WTC11 (cell line): ENCODE measurements at regions of chr1 and their contacts with region 1.

Region 1: DNA sequence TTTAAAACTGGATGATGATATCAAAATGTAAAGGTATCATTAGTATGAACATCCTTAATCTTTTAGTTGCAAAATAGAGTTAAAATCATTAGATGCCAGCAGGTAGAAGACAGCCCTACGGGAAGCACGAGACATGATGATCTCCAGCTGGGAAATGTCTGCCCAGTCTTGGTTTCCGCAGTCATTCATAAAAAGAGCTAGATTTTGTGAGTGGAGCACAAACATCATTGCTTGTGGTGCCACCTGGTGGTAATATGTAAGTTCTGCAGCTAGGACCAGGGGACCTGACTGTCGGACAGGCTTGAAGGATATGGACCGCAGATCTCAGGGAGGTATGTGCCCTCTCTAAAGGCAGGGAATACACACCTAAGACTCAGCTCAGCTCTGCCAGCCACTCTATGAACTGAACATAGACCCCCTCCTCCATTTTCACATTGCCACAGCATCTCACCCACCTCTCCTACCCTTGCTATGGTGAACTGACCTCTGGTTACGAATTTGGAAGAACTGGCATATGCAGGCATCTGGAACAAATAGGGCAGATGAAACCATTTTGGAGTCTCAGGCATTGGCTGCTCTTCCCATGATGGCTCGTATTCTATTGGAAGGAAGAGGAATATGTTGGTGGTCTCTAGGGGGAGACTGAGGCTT is 9.2 kb downstream of the FCMR start:
- DNase-seq: peak; percentile 70
- ATAC-seq: peak; percentile 43
- H3K4me3 Mint-ChIP-seq: no peak overlapping the region
- H3K27ac Mint-ChIP-seq: no peak overlapping the region
- H3K4me1 Mint-ChIP-seq: peaks cover 8% of the 10 kb centered on the region
- H3K27me3 Mint-ChIP-seq: peaks cover 40% of the 10 kb centered on the region
- CTCF ChIP-seq: peak; percentile 81

Region 2: DNA sequence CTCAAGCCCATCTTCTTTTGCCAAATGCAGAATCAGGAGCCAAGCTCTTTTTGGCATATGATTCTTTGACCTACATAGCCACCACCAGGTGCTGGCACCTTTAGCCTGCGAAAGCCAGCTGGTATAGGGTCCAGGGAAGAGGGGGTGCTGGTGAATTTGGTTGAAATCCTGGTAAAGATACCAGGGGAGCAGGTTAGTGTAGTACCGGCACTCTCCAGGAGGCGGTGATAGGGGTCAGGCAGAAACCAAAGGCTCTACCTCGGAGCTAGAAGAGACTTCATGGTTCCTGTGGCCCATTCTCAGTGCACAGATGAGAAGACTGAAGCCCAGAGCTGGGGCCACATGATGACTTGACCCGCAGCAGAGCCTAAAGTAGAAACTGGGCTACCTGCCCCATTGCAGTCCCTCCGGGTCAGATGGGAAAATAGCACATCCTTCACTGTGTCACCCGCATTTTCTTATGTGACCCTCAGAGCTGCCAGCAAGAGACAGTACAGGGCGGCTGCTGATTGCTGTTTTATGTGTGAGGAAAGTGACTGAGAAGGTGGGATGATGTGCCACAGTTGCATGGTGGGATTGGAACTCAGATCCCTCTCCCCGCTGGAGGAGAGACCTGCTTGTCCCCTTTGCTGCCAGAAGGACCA is 177.9 kb before region 1 on chr1:
- CTCF ChIA-PET with region 1: interaction called, 35 read pairs
- POLR2A ChIA-PET with region 1: interaction called, 10 read pairs
- DNase-seq: peak; percentile 87
- ATAC-seq: peak; percentile 83
- H3K4me3 Mint-ChIP-seq: no peak overlapping the region
- H3K27ac Mint-ChIP-seq: no peak overlapping the region
- H3K4me1 Mint-ChIP-seq: peaks cover 11% of the 10 kb centered on the region
- H3K27me3 Mint-ChIP-seq: no peaks in the 10 kb centered on the region; the same call in 1 of the 2 replicates
- CTCF ChIP-seq: peak; percentile 87

Region 3: GRCh38 chr1:206797534-206798383 is 114.8 kb before region 1 on chr1:
- CTCF ChIA-PET with region 1: interaction called, 15 read pairs
- POLR2A ChIA-PET with region 1: no interaction called
- DNase-seq: peak; percentile 67
- ATAC-seq: peak; percentile 99
- H3K4me3 Mint-ChIP-seq: no peak overlapping the region
- H3K27ac Mint-ChIP-seq: no peak overlapping the region
- H3K4me1 Mint-ChIP-seq: no peaks in the 10 kb centered on the region
- H3K27me3 Mint-ChIP-seq: no peaks in the 10 kb centered on the region
- CTCF ChIP-seq: peak; percentile 61

Region 4: DNA sequence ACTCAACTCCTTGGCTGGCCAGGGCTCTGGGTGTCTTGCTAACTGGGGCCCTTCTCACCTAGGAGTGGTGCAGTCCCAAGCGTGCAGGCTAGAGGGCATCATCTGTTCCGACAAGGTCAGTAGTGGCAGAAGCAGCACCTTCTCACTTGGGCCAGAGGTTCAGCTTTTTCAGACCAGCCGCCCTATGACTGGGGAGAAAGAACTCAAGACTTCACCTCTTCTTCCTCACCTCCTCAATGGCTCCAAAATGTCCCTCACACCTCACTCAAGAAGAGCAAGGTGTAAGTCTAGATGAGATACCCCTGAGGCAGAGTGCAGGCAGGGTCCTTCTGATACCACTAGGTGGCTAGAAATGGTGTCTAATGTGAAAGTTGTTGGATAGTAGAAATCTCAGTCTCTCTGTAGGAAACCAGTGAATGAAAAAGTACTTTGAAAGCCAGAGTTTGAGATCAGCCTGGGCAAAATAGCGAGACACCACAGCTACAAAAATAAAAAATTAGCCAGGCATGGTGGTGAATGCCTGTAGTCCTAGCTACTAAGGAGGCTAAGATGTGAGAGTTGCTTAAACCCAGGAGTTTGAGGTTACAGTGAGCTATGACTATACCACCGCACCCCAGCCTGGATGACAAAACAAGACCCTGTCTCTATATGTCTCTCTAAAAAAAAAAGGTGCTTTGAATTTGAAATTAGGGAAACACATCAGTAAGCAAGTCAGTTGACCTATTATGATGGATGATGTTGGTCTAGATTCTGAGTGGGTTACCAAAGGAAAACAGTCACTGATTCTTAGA is 55.7 kb before region 1 on chr1:
- CTCF ChIA-PET with region 1: interaction called, 13 read pairs
- POLR2A ChIA-PET with region 1: no interaction called
- DNase-seq: no peak
- ATAC-seq: peak; percentile 81
- H3K4me3 Mint-ChIP-seq: no peak overlapping the region
- H3K27ac Mint-ChIP-seq: no peak overlapping the region
- H3K4me1 Mint-ChIP-seq: peaks cover 2% of the 10 kb centered on the region; the same call in 1 of the 2 replicates
- H3K27me3 Mint-ChIP-seq: peaks cover 14% of the 10 kb centered on the region
- CTCF ChIP-seq: no peak

Region 5: GRCh38 chr1:206895830-206896242 is 16.7 kb before region 1 on chr1:
- CTCF ChIA-PET with region 1: interaction called, 11 read pairs
- POLR2A ChIA-PET with region 1: no interaction called
- DNase-seq: no peak
- ATAC-seq: no peak
- H3K4me3 Mint-ChIP-seq: no peak overlapping the region
- H3K27ac Mint-ChIP-seq: no peak overlapping the region
- H3K4me1 Mint-ChIP-seq: peaks cover 10% of the 10 kb centered on the region
- H3K27me3 Mint-ChIP-seq: no peaks in the 10 kb centered on the region
- CTCF ChIP-seq: no peak

Region 6: GRCh38 chr1:206935491-206936067 is 23.0 kb after region 1 on chr1:
- CTCF ChIA-PET with region 1: interaction called, 34 read pairs
- POLR2A ChIA-PET with region 1: no interaction called
- DNase-seq: peak; percentile 83
- ATAC-seq: peak; percentile 92
- H3K4me3 Mint-ChIP-seq: no peak overlapping the region
- H3K27ac Mint-ChIP-seq: no peak overlapping the region
- H3K4me1 Mint-ChIP-seq: peaks cover 5% of the 10 kb centered on the region; the same call in 1 of the 2 replicates
- H3K27me3 Mint-ChIP-seq: no peaks in the 10 kb centered on the region
- CTCF ChIP-seq: peak; percentile 59

Region 7: DNA sequence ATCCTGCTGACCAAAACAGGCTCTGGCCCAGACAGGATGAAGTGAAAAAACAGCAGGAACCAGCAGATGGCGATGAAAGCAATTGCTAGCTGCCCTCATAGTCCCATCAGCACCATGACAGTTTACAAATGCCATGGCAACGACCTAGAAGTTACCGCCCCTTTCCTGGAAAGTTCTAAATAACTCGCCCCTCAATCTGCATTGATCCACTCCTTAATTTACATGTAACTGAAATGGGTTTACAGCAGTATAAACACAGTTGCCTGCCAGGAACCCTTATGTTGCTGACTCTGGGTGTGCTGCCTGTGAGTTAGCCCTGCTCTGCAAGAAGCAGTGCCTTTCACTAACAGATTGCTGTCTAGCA is 666.8 kb after region 1 on chr1:
- CTCF ChIA-PET with region 1: no interaction called
- POLR2A ChIA-PET with region 1: no interaction called
- DNase-seq: peak; percentile 72
- ATAC-seq: peak; percentile 98
- H3K4me3 Mint-ChIP-seq: no peak overlapping the region
- H3K27ac Mint-ChIP-seq: 0 out of 2 replicates have a peak overlapping the region, but pooled peaks have one; percentile 18
- H3K4me1 Mint-ChIP-seq: peaks cover 23% of the 10 kb centered on the region
- H3K27me3 Mint-ChIP-seq: no peaks in the 10 kb centered on the region; the same call in 1 of the 2 replicates
- CTCF ChIP-seq: 0 out of 2 replicates have a peak, but pooled peaks have one; percentile 24